PC-3 (cell line): ENCODE measurements at regions of chr11 and their contacts with region 1.

Region 1: GRCh38 chr11:83007909-83008580 is 63.7 kb downstream of the RAB30 start:
- DNase-seq: no peak
- ATAC-seq: no peak
- H3K4me3 ChIP-seq: no peak overlapping the region
- H3K27ac ChIP-seq: no peak overlapping the region
- H3K4me1 ChIP-seq: peaks cover 28% of the 10 kb centered on the region
- H3K27me3 ChIP-seq: no peaks in the 10 kb centered on the region
- CTCF ChIP-seq: no peak

Region 2: DNA sequence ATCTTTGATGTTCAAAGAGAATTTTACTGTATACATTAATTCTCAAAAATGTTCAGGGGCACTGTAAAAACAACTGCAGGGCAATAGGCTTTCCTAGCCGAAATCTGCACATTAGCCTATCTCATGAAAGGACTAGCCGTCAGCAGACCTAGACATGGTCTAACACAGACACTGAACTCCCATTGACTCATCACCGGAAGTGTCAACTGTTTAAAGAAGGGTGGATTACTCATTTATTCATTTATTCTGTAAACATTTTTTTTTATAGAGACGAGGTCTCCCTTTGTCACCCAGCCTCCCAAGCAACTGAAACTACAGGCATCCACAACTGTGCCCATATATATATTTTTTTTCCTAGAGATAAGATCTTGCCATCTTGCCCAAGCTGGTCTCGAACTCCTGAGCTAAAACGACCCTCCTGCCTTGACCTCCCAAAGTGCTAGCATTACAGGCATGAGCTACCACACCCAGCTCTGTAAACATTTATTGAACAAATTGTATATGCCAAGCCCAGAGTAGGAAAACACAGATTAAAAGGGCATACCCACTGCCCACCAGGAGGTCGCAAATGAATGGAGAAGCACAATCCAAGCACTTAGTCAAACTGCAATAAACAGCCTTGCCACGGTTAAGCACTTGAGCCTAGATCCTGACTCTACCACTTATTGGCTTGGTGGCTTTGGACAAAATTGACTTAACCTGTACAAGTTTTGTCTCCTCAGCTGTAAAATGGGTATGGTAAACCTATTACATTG is 37.1 kb after region 1 on chr11:
- CTCF ChIA-PET with region 1: no interaction called
- POLR2A ChIA-PET with region 1: no interaction called
- intact Hi-C with region 1: loop called (anchors 2 kb)
- DNase-seq: peak; percentile 95
- ATAC-seq: peak; percentile 96
- H3K4me3 ChIP-seq: peak overlapping the region; percentile 37; the same call in 1 of the 2 replicates
- H3K27ac ChIP-seq: peak overlapping the region; percentile 70
- H3K4me1 ChIP-seq: peaks cover 45% of the 10 kb centered on the region
- H3K27me3 ChIP-seq: no peaks in the 10 kb centered on the region
- CTCF ChIP-seq: no peak